ENCODE measurements at regions of chr14 and their contacts with region 1.

Region 1: DNA sequence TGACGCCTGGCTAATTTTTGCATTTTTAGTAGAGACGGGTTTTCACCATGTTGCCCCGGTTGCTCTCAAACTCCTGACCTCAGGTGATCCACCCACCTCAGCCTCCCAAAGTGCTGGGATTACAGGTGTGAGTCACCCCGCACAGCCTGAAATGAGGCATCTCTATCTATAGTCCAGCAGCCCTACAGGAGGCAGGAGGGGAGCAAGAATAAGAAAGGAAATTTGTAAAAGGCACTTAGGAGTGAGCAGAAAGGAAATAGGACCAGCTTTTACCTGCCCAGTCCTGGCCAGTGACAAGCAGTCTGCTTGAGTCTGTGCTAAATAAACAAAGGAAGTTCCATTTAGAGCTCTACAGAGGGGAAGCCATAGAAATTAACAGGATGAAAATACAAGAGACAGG is 15.0 kb upstream of the PSMA6 start:
- DNase-seq: no peak
- ATAC-seq: no peak
- H3K4me3 ChIP-seq: no peak overlapping the region
- H3K4me3 Mint-ChIP-seq: no peak overlapping the region
- H3K27ac ChIP-seq: no peak overlapping the region
- H3K27ac Mint-ChIP-seq: no peak overlapping the region
- H3K4me1 ChIP-seq: no peaks in the 10 kb centered on the region
- H3K4me1 Mint-ChIP-seq: no peaks in the 10 kb centered on the region
- H3K27me3 ChIP-seq: no peaks in the 10 kb centered on the region
- H3K27me3 Mint-ChIP-seq: no peaks in the 10 kb centered on the region

Region 2: GRCh38 chr14:35399083-35399937 is 122.1 kb after region 1 on chr14:
- CTCF ChIA-PET with region 1: interaction called in 1 of 2 experiments, 3 read pairs
- POLR2A ChIA-PET with region 1: interaction called, 8 to 10 read pairs
- DNase-seq: peak in 2 of 35 experiments; percentile 10 to 41
- ATAC-seq: no peak
- H3K4me3 ChIP-seq: no peak overlapping the region
- H3K4me3 Mint-ChIP-seq: peak overlapping the region in 1 of 3 donors; percentile 4
- H3K27ac ChIP-seq: peak overlapping the region; percentile 39
- H3K27ac Mint-ChIP-seq: peak overlapping the region; percentile 57 to 82
- H3K4me1 ChIP-seq: peaks cover 27 to 34% of the 10 kb centered on the region in 2 experiments
- H3K4me1 Mint-ChIP-seq: peaks cover 46 to 57% (median 53%) of the 10 kb centered on the region in 3 donors
- H3K27me3 ChIP-seq: no peaks in the 10 kb centered on the region
- H3K27me3 Mint-ChIP-seq: no peaks in the 10 kb centered on the region

Measured in T-cell (primary cell).